ENCODE measurements at regions of chr6 and their contacts with region 1.

Region 1: GRCh38 chr6:36759148-36759759 is 61.6 kb downstream of the RAB44 start:
- DNase-seq: no peak
- H3K4me3 ChIP-seq: no peak overlapping the region
- CTCF ChIP-seq: peak; percentile 99

Region 2: GRCh38 chr6:36605560-36606391 is 153.5 kb before region 1 on chr6:
- CTCF ChIA-PET with region 1: interaction called, 17 read pairs
- POLR2A ChIA-PET with region 1: no interaction called
- DNase-seq: no peak
- H3K4me3 ChIP-seq: no peak overlapping the region
- CTCF ChIP-seq: no peak

Region 3: DNA sequence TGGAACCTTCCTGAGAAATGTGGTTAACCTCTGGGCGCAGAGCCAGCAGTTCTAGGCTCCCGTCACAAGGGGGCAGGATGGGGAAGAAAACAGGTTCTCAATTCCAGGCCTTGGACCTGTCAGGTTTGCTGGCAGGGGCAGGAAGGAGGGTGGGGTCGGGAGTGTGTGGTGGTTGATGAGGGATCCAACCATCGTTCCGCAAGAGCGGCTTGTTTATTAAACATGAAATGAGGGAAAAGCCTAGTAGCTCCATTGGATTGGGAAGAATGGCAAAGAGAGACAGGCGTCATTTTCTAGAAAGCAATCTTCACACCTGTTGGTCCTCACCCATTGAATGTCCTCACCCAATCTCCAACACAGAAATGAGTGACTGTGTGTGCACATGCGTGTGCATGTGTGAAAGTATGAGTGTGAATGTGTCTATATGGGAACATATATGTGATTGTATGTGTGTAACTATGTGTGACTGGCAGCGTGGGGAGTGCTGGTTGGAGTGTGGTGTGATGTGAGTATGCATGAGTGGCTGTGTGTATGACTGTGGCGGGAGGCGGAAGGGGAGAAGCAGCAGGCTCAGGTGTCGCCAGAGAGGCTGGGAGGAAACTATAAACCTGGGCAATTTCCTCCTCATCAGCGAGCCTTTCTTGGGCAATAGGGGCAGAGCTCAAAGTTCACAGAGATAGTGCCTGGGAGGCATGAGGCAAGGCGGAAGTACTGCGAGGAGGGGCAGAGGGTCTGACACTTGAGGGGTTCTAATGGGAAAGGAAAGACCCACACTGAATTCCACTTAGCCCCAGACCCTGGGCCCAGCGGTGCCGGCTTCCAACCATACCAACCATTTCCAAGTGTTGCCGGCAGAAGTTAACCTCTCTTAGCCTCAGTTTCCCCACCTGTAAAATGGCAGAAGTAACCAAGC is 135.5 kb before region 1 on chr6:
- CTCF ChIA-PET with region 1: interaction called, 167 read pairs
- POLR2A ChIA-PET with region 1: no interaction called
- DNase-seq: no peak
- H3K4me3 ChIP-seq: no peak overlapping the region
- CTCF ChIP-seq: peak; percentile 87

Region 4: GRCh38 chr6:36678518-36679027 is 80.7 kb before region 1 on chr6 and contains the start of gene CDKN1A:
- CTCF ChIA-PET with region 1: interaction called, 29 read pairs
- POLR2A ChIA-PET with region 1: interaction called, 5 read pairs
- DNase-seq: no peak
- H3K4me3 ChIP-seq: peak within 1 kb of the TSS; percentile 91
- CTCF ChIP-seq: no peak

Region 5: GRCh38 chr6:36724514-36725390 is 34.5 kb before region 1 on chr6:
- CTCF ChIA-PET with region 1: interaction called, 39 read pairs
- POLR2A ChIA-PET with region 1: no interaction called
- DNase-seq: no peak
- H3K4me3 ChIP-seq: no peak overlapping the region
- CTCF ChIP-seq: peak; percentile 52

Region 6: GRCh38 chr6:36851149-36851614 is 91.9 kb after region 1 on chr6:
- CTCF ChIA-PET with region 1: interaction called, 169 read pairs
- POLR2A ChIA-PET with region 1: no interaction called
- DNase-seq: peak; percentile 14
- H3K4me3 ChIP-seq: no peak overlapping the region
- CTCF ChIP-seq: peak; percentile 67

Measured in AG04449 (cell line).